Activated CD4-positive, alpha-beta memory T cell treated with anti-CD3 and anti-CD28 coated beads for 36 hours (primary cell): ENCODE measurements at regions of chr2 and their contacts with region 1.

Region 1: GRCh38 chr2:24084386-24085361 is at the start of gene TP53I3:
- DNase-seq: peak; percentile 87
- H3K4me3 Mint-ChIP-seq: peak within 1 kb of the TSS; percentile 81
- H3K27ac Mint-ChIP-seq: peak within 1 kb of the TSS; percentile 61
- H3K4me1 Mint-ChIP-seq: peaks cover 14% of the 10 kb centered on the region
- H3K27me3 Mint-ChIP-seq: no peaks in the 10 kb centered on the region
- total RNA-seq, gene TP53I3: 0.90 to 0.94 TPM

Region 2: DNA sequence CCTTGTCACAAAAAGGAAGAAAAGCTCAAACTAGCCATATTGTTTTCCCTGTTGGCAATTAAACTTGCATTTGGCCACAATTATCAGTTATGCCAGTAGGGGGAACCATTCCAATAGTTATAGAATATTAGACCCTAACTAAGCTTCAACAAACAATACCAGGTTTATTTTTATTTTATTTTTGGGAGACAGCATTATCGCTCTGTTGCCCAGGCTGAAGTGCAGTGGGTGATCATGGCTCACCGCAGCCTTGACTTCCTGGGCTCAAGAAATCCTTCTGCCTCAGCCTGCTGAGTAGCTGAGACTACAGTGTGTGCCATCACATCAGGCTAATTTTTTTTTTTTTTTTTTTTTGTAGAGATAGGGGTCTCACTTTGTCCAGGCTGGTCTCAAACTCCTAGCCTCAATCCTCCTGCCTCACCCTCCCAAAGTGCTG is 259.9 kb before region 1 on chr2:
- CTCF ChIA-PET with region 1: interaction called, 87 read pairs
- POLR2A ChIA-PET with region 1: no interaction called
- intact Hi-C with region 1: loop called (anchors 1 kb)
- DNase-seq: no peak
- H3K4me3 Mint-ChIP-seq: no peak overlapping the region
- H3K27ac Mint-ChIP-seq: no peak overlapping the region
- H3K4me1 Mint-ChIP-seq: peaks cover 2% of the 10 kb centered on the region
- H3K27me3 Mint-ChIP-seq: no peaks in the 10 kb centered on the region

Region 3: GRCh38 chr2:23988371-23988770 is 96.3 kb before region 1 on chr2:
- CTCF ChIA-PET with region 1: interaction called, 12 read pairs
- POLR2A ChIA-PET with region 1: no interaction called
- intact Hi-C with region 1: loop called (anchors 1 kb)
- DNase-seq: no peak
- H3K4me3 Mint-ChIP-seq: no peak overlapping the region
- H3K27ac Mint-ChIP-seq: no peak overlapping the region
- H3K4me1 Mint-ChIP-seq: no peaks in the 10 kb centered on the region
- H3K27me3 Mint-ChIP-seq: no peaks in the 10 kb centered on the region

Region 4: DNA sequence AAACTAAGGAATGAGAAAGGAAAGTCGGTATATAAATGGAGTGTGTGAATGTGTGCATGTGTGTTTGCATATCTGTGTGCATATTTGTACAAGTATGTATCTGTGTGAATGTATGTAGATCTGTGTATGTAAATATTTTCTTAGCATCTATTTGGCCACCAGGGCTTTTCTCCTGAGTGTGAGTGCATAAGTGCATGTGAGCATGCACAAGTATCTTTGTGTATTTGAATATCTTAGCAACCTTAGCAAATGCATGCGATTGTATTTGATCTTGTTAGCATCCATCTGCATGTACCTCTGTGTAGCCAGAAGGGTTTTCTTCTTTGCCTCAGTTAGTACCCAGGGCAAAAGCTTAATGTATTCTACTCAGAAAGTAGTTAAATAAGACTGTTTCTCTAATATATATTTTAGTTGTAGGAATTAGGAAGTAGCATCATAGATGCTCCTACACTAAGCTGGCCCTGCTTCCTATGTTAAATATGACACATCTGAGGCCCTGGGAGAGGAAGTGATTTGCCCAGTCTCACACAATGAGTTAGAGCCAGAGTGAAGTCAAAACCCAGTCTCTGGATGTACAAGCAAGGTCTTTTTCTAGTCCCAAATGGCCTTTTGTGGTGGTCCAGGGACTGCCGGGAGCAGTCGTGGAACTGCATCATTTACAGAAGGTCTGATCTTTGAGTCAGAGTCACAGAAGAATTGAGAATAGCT is 26.0 kb before region 1 on chr2:
- CTCF ChIA-PET with region 1: interaction called, 14 read pairs
- POLR2A ChIA-PET with region 1: no interaction called
- intact Hi-C with region 1: no loop called
- DNase-seq: no peak
- H3K4me3 Mint-ChIP-seq: no peak overlapping the region
- H3K27ac Mint-ChIP-seq: no peak overlapping the region
- H3K4me1 Mint-ChIP-seq: peaks cover 7% of the 10 kb centered on the region
- H3K27me3 Mint-ChIP-seq: no peaks in the 10 kb centered on the region

Region 5: GRCh38 chr2:24123195-24123921 is 38.7 kb after region 1 on chr2 and contains the starts of genes FAM228B and PFN4:
- CTCF ChIA-PET with region 1: interaction called, 31 read pairs
- POLR2A ChIA-PET with region 1: no interaction called
- intact Hi-C with region 1: no loop called
- DNase-seq: peak; percentile 82
- H3K4me3 Mint-ChIP-seq: peak within 1 kb of the TSS; percentile 72
- H3K27ac Mint-ChIP-seq: no peak within 1 kb of the TSS
- H3K4me1 Mint-ChIP-seq: peaks cover 10% of the 10 kb centered on the region
- H3K27me3 Mint-ChIP-seq: no peaks in the 10 kb centered on the region
- total RNA-seq, gene FAM228B: 6.5 to 7.2 TPM
- total RNA-seq, gene PFN4: 0.40 TPM in 1 of 2 experiments, not detected in the other